Activated CD4-positive, alpha-beta T cell treated with anti-CD3 and anti-CD28 coated beads, Interleukin-2, amount 10 ng/mL, durations not matched to agents 24 days and 14 days (primary cell): ENCODE measurements at regions of chr2 and their contacts with region 1.

Region 1: GRCh38 chr2:222242532-222242931 is 56.3 kb downstream of the PAX3 start:
- DNase-seq: no peak
- H3K4me3 Mint-ChIP-seq: no peak overlapping the region
- H3K27ac Mint-ChIP-seq: no peak overlapping the region
- H3K4me1 Mint-ChIP-seq: no peaks in the 10 kb centered on the region
- H3K27me3 Mint-ChIP-seq: peaks cover 45% of the 10 kb centered on the region

Region 2: GRCh38 chr2:221958224-221958623 is 284.3 kb before region 1 on chr2:
- intact Hi-C with region 1: no loop called
- DNase-seq: no peak
- H3K4me3 Mint-ChIP-seq: no peak overlapping the region
- H3K27ac Mint-ChIP-seq: no peak overlapping the region
- H3K4me1 Mint-ChIP-seq: no peaks in the 10 kb centered on the region
- H3K27me3 Mint-ChIP-seq: no peaks in the 10 kb centered on the region

Region 3: DNA sequence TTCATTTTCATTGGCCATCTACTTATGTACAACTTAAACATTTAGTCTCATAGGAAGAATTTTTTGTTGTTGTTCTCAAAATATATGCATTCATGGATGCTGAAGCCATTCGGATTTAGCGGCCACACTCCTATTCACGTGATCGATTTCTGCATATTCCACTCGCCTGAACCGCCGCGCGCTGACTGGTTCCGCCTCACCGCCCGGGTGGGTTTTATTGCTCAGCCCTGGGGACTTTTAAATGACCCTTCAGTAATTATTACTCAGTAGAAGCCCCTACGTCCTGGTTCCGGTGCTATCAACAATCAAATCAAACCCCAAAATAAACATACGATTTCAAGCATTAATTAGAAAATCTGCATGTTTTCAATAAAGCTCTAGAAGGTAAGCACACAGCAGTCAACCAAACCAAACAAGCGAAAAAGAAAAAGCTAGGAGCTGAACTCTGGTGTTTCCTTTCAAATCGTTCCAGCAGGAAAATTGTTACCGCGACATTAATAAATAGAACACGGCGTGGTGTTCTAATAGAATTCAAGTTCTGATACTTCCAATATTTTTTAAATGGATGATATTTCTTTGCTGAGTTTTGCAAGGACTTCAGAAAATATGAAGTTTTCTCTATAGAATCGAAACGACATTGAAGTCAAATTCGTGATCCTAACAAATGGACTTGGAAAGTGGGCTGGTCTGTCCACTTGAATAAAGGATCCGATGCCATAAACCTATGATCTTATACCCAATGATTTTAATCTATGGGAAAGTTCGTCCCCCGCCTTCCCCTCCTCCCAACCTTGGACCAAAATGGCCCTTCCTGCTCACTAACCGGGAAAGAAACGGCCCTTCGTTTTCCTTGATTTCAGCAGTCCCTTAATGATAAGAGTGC is 47.0 kb after region 1 on chr2:
- intact Hi-C with region 1: loop called (anchors 5 kb)
- DNase-seq: no peak
- H3K4me3 Mint-ChIP-seq: no peak overlapping the region
- H3K27ac Mint-ChIP-seq: peak overlapping the region; percentile 17
- H3K4me1 Mint-ChIP-seq: peaks cover 3% of the 10 kb centered on the region
- H3K27me3 Mint-ChIP-seq: peaks cover 84% of the 10 kb centered on the region

Region 4: DNA sequence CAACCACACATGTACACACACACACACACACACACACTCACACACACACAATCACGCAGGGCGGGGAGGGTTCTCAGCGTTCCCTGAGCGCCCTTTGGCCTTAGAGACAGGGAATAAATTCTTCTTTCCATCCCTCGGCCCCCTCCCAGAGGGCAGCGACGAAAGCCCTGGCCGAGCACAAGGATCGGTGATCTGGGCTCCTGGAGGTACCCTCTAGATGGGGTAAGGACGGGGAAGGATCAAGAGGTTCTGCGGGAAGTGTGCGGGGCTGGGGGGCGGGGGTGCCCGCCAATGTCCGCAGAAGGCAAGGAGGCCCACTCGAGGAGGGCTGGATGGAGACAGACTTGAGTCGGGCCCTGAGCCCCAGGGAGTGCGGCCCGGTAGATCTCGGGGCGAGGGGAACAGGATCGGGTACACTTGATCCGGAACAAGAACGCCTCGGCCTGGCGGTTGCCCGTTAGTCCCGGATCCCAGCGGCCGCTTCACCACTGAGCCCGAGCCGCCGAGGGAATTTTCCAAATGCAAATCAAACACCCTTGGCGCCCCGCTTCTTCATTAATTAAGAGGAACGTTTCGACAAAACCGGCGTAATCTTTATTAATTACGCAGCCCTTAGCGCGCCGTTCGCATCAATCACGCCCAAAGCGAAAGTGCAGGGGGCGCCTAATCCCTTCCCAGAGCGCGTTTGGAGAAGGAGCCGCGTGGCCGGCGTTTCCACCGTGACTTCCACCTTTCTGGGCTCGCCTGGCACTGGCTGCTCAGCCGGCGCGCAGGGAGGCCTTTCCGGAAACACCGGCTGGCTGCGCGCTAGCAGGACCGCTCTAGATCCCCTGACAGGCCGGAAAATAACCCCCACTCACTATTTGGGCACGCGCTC is 63.2 kb after region 1 on chr2:
- intact Hi-C with region 1: loop called (anchors 5 kb)
- DNase-seq: no peak
- H3K4me3 Mint-ChIP-seq: peak overlapping the region; percentile 83
- H3K27ac Mint-ChIP-seq: peak overlapping the region; percentile 53
- H3K4me1 Mint-ChIP-seq: peaks cover 17% of the 10 kb centered on the region
- H3K27me3 Mint-ChIP-seq: peaks cover 95% of the 10 kb centered on the region